ENCODE measurements at regions of chr20 and their contacts with region 1.

Region 1: DNA sequence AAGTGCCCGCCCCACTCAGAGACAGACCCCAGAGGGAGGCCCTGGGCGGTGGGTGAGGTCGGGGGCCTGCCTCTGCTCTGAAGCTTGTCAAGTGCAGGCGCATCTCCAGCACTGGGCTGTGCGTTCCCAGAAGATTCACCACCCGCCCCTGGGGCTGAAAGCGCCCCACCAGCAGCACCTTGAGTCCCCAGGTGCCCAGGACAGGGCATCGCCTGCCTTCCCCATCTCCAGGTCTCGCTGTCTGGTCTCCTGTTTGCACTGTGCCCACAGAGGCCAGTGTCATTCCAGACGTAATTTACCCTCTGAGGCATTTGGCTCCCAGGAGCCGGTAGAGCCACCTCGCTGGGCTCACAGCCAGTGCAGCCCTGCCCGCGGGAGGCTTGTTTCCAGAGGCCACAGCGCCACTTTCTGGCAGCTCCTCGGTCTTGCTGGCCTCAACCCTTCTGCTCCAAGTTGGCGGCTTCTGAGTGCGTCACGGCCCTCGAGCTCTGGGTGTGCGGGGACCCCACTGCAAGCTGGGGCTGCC is 191.1 kb downstream of the TAF4 start:
- DNase-seq: peak; percentile 68
- H3K27ac ChIP-seq: no peak overlapping the region
- CTCF ChIP-seq: peak; percentile 46

Region 2: GRCh38 chr20:61859767-61860166 is 14.8 kb before region 1 on chr20:
- CTCF ChIA-PET with region 1: no interaction called
- POLR2A ChIA-PET with region 1: no interaction called
- DNase-seq: no peak
- H3K27ac ChIP-seq: no peak overlapping the region
- CTCF ChIP-seq: no peak

Region 3: DNA sequence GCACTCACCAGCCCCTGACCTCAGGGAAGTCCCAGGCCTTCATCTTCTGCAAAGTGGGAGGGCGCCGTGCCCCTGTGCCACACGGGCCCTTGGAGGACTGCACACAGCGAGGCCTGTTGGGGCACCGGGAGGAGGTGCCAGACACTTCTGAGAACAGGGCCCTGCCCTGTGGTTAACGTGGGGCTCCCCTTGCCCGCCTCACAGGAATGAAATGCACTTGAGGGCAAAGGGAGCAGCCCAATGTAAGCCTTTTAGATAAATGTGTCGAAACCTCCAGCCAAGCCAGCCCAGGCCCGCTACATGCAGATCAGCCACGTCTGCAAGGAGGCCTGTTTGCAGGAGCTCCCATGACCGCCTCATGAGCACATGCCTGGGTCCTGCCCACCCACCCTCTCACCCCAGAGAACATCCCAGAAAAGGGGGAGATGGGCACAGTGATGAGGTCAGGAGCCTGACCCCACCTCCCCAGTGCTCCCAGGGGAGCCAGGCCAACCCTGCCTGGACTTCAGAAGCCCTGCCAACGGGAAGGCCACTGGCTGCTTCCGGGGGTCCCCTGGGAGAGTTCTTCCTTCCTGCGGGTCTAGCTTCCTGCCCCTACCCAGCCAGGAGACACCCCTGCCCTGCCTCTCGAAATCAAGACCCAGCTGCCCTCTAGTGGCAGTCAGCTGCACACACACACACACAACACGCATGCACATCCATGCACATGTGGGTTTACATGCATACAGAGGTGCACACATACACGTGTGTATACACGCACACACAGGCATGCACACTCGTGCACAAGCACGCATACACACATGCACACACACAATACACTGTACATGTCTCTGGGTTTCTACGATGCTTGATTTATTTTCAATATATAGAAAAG is 12.4 kb after region 1 on chr20:
- CTCF ChIA-PET with region 1: interaction called, 15 read pairs
- POLR2A ChIA-PET with region 1: no interaction called
- DNase-seq: peak; percentile 65
- H3K27ac ChIP-seq: no peak overlapping the region
- CTCF ChIP-seq: peak; percentile 97

Measured in RWPE1 (cell line).